Panc1 (cell line): ENCODE measurements at regions of chr9 and their contacts with region 1.

Region 1: DNA sequence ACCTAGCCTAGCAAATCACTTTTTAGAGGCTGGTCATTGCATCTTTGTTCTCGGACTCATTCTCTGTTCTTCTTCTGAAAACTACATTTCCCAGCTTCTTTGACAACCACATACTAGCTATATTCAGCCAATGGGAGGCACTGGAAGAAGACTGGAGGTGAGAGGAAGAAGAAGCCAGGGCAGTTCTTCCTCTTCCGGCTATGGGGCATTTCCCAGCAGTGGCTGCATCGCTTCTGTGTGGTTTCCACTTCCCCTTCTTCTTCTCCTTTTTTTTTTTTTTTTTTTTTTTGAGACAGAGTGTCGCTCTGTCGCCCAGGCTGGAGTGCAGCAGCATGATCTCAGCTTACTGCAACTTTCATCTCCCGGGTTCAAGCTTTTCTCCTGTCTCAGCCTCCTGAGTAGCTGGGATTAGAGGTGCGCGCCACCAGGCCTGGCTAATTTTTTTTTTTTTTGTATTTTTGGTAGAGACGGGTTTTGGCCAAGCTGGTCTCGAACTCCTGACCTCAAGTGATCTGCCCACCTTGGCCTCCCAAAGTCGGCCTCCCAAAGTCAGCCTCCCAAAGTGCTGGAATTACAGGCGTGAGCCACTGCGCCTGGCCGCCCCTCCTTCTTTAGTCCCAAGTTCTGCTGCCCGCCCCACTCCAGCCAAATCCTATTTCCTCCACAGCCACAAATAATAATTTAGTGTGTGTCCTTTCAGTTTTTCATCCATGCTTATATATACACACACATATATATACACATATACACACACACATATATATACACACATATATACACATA is 6.9 kb upstream of the UBAP1 start:
- DNase-seq: no peak
- ATAC-seq: no peak
- H3K4me3 ChIP-seq: no peak overlapping the region
- H3K27ac ChIP-seq: no peak overlapping the region
- H3K4me1 ChIP-seq: no peaks in the 10 kb centered on the region
- H3K27me3 ChIP-seq: no peaks in the 10 kb centered on the region
- CTCF ChIP-seq: no peak

Region 2: DNA sequence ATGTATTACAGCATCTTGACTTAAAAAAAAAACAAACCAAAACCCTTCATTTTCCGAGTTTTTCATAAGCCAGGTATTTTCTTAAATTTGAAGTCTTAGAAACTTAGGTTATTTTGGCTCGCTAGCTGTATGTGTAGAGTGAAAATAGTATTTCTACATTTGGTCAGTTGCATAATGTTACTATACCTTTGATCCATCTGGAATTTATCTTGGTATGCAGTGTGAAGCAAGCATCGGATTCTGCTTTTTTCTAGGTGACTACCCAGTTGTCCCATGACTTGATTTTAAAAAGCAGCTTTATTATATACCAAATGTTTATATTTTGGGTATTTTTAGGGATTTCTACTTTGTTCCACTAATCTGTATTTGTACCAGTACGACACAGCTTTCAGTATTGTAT is 34.6 kb after region 1 on chr9:
- CTCF ChIA-PET with region 1: no interaction called
- POLR2A ChIA-PET with region 1: interaction called, 10 read pairs
- in situ Hi-C with region 1: no loop called
- intact Hi-C with region 1: no loop called
- DNase-seq: no peak
- ATAC-seq: no peak
- H3K4me3 ChIP-seq: no peak overlapping the region
- H3K27ac ChIP-seq: no peak overlapping the region
- H3K4me1 ChIP-seq: no peaks in the 10 kb centered on the region
- H3K27me3 ChIP-seq: no peaks in the 10 kb centered on the region
- CTCF ChIP-seq: no peak